ENCODE measurements at regions of chr19 and their contacts with region 1.

Region 1: GRCh38 chr19:18281082-18282020 is at the start of gene JUND:
- DNase-seq: peak; percentile 95 to 97
- ATAC-seq: peak; percentile 60 to 66
- H3K4me3 ChIP-seq: peak within 1 kb of the TSS; percentile 78 to 98 (median 90)
- H3K27ac ChIP-seq: peak within 1 kb of the TSS; percentile 99 to 100 (median 100)
- H3K4me1 ChIP-seq: peaks cover 22 to 37% of the 10 kb centered on the region in 2 donors
- H3K27me3 ChIP-seq: no peaks in the 10 kb centered on the region
- CTCF ChIP-seq: peak in 1 of 5 experiments; percentile 7
- POLR2A ChIP-seq: peak; percentile 99
- total RNA-seq, gene JUND: 67.2 to 258 (median 221) TPM

Region 2: DNA sequence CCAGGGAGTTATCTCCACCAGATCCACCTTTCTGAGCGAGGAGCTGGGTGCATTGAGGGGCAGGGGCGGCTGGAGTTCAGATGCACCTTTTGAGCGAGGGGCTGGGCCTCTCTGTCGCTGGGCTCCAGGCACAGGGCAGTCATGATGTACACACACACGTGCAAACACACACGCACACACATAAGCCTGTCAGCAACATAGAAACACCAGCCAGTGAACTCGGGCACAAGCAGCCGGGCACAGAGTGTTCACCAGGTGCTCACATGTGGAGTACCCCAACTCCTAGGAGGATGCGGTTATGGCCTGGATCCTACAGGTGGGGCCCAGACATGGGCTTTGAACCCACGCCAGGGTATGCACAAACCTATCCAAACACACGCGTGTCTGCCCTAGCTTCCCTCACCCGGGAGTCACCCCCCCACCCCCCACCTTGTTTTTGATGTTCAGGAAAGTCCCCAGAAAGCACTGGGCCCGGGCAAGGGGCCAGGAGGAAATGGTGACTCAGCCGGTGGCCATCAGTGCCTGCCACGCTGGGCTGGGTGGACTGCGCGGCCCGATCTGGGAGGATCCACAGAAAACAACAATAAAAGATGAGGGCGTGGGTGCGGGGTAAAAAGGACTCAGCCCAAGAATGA is 260.1 kb before region 1 on chr19:
- in situ Hi-C with region 1: no loop called
- intact Hi-C with region 1: loop called (anchors 5 kb)
- DNase-seq: peak; percentile 92
- ATAC-seq: peak; percentile 10 to 13
- H3K4me3 ChIP-seq: peak overlapping the region in 3 of 4 donors; percentile 18 to 54 (median 30)
- H3K27ac ChIP-seq: peak overlapping the region; percentile 89 to 100 (median 95)
- H3K4me1 ChIP-seq: peaks cover 68 to 75% of the 10 kb centered on the region in 2 donors
- H3K27me3 ChIP-seq: no peaks in the 10 kb centered on the region
- CTCF ChIP-seq: peak in 1 of 5 experiments; percentile 34
- POLR2A ChIP-seq: peak in 1 of 2 donors; percentile 60

Region 3: GRCh38 chr19:18251587-18252369 is 29.6 kb before region 1 on chr19:
- in situ Hi-C with region 1: no loop called
- intact Hi-C with region 1: no loop called
- DNase-seq: peak; percentile 15 to 66
- ATAC-seq: peak; percentile 84 to 87
- H3K4me3 ChIP-seq: no peak overlapping the region
- H3K27ac ChIP-seq: no peak overlapping the region
- H3K4me1 ChIP-seq: no peaks in the 10 kb centered on the region
- H3K27me3 ChIP-seq: no peaks in the 10 kb centered on the region
- CTCF ChIP-seq: peak; percentile 94 to 98 (median 97)
- POLR2A ChIP-seq: no peak

Region 4: DNA sequence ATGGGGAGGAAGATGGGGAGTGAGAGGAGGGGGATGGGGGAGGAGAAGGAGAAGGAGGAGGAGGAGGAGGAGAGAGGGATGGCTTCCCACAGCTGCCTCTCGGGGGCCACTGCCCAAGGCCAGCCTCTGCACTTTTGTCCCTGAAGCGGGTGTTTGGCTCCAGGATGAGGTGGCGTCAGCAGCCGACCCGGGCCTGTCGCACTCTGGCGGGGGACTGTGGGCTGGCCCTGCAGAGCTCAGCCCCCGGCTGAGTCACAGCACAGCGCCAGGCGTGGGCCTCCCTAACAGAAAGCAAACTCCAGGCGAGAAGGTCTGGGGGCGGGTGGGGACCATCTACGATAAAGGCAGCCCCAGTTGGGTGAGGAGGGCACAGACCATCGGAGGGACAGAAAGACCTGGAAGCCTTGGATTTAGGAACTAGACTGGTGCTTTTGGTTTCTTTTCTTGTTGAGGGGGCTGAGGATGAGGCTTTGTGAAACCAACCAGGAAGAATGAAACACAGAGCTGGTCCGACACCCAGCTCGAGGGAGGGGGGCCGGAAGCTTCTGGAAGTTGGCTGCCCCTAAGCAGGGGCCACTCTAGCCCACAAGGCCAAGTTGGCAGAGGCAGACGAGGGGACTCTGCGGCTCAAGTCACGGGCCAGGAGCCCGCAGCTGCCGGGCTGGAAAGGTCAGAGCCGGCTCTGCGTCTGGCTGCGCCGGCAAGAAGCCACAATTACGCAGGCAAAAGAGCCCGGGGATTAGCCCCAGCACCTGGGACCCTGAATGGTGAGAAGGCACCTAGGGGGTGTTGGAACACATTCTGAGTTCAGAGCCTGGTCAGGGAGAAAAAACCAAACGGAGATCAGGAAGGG is 23.3 kb after region 1 on chr19:
- in situ Hi-C with region 1: no loop called
- intact Hi-C with region 1: loop called (anchors 1 kb)
- DNase-seq: peak; percentile 68 to 90
- ATAC-seq: peak; percentile 46 to 53
- H3K4me3 ChIP-seq: peak overlapping the region; percentile 37 to 57 (median 56)
- H3K27ac ChIP-seq: peak overlapping the region; percentile 88 to 99 (median 94)
- H3K4me1 ChIP-seq: peaks cover 50 to 64% of the 10 kb centered on the region in 2 donors
- H3K27me3 ChIP-seq: no peaks in the 10 kb centered on the region
- CTCF ChIP-seq: no peak
- POLR2A ChIP-seq: peak; percentile 73 to 84

Region 5: GRCh38 chr19:18328340-18329034 is 47.1 kb after region 1 on chr19:
- in situ Hi-C with region 1: loop called (anchors 5 kb)
- intact Hi-C with region 1: loop called (anchors 1 kb)
- DNase-seq: peak; percentile 92 to 96
- ATAC-seq: peak; percentile 99 to 100
- H3K4me3 ChIP-seq: peak overlapping the region; percentile 6 to 40 (median 34)
- H3K27ac ChIP-seq: peak overlapping the region; percentile 62 to 79 (median 69)
- H3K4me1 ChIP-seq: peaks cover 18 to 24% of the 10 kb centered on the region in 2 donors
- H3K27me3 ChIP-seq: no peaks in the 10 kb centered on the region
- CTCF ChIP-seq: peak; percentile 94 to 98 (median 96)
- POLR2A ChIP-seq: peak; percentile 30 to 77

Region 6: GRCh38 chr19:18521885-18522624 is 240.7 kb after region 1 on chr19 and contains the start of gene ELL:
- in situ Hi-C with region 1: no loop called
- intact Hi-C with region 1: loop called (anchors 5 kb)
- DNase-seq: peak; percentile 100
- ATAC-seq: peak; percentile 73 to 74
- H3K4me3 ChIP-seq: peak within 1 kb of the TSS; percentile 85 to 99 (median 95)
- H3K27ac ChIP-seq: peak within 1 kb of the TSS; percentile 97 to 100 (median 98)
- H3K4me1 ChIP-seq: peaks cover 27 to 31% of the 10 kb centered on the region in 2 donors
- H3K27me3 ChIP-seq: no peaks in the 10 kb centered on the region
- CTCF ChIP-seq: peak in 1 of 5 experiments; percentile 40
- POLR2A ChIP-seq: peak; percentile 99
- total RNA-seq, gene ELL: 21.8 to 30.8 (median 27.3) TPM

Region 7: GRCh38 chr19:18571564-18572300 is 290.4 kb after region 1 on chr19 and contains the start of gene UBA52:
- in situ Hi-C with region 1: no loop called
- intact Hi-C with region 1: no loop called
- DNase-seq: peak; percentile 97 to 98
- ATAC-seq: peak; percentile 94 to 95
- H3K4me3 ChIP-seq: peak within 1 kb of the TSS; percentile 78 to 90 (median 82)
- H3K27ac ChIP-seq: peak within 1 kb of the TSS; percentile 88 to 98 (median 94)
- H3K4me1 ChIP-seq: peaks cover 10 to 16% of the 10 kb centered on the region in 2 donors
- H3K27me3 ChIP-seq: no peaks in the 10 kb centered on the region
- CTCF ChIP-seq: peak in 1 of 5 experiments; percentile 6
- POLR2A ChIP-seq: peak; percentile 95 to 98
- total RNA-seq, gene UBA52: 512 to 719 (median 537) TPM

Measured in gastrocnemius medialis (tissue), 4 donors.